ENCODE measurements at regions of chr1 and their contacts with region 1.

Region 1: GRCh38 chr1:32255072-32256071 is 4.3 kb downstream of the LCK start:
- DNase-seq: peak; percentile 55
- H3K4me3 Mint-ChIP-seq: peak overlapping the region; percentile 98
- H3K27ac Mint-ChIP-seq: peak overlapping the region; percentile 93
- H3K4me1 Mint-ChIP-seq: peaks cover 45% of the 10 kb centered on the region
- H3K27me3 Mint-ChIP-seq: no peaks in the 10 kb centered on the region

Region 2: GRCh38 chr1:32179443-32180185 is 75.8 kb before region 1 on chr1 and contains the start of gene TXLNA:
- CTCF ChIA-PET with region 1: interaction called, 6 read pairs
- POLR2A ChIA-PET with region 1: interaction called, 27 read pairs
- DNase-seq: peak; percentile 92
- H3K4me3 Mint-ChIP-seq: peak within 1 kb of the TSS; percentile 88
- H3K27ac Mint-ChIP-seq: peak within 1 kb of the TSS; percentile 96
- H3K4me1 Mint-ChIP-seq: peaks cover 43% of the 10 kb centered on the region
- H3K27me3 Mint-ChIP-seq: no peaks in the 10 kb centered on the region
- total RNA-seq, gene TXLNA: 79.8 to 81.2 TPM

Region 3: DNA sequence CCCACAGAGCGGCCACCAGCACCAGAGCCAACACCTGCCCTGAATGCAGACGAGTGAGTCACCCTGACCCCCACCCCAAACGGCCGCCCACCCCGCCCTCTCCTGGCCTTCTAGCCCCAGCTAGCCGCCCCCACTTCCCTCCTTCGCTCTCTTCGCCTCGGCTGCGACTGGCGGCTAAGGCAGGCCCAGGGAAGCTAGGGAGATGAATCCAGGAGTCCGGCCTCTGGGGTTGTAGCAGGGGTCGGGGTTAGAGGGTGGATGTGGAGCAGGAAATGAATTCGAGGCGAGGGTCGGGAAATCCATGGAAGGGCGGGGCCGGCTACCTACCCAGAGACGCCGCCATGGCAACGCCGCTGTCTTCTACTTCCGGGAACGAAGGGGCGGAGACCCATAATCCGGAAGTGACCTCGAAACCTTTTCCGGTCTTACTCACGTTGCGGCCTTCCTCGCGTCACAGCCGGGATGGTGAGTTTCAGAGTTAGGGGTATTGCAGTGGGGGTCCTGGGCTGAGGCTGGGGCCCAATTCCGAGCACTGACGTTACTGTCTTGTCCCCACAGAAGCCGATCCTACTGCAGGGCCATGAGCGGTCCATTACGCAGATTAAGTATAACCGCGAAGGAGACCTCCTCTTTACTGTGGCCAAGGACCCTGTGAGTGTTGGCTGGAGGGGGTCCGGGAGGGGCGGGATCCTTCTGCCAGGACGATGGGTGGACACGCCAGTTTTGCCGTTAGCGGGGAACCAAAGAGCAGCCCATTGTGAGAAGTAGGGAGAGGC is 33.2 kb before region 1 on chr1 and contains the starts of genes EIF3I and TMEM234:
- CTCF ChIA-PET with region 1: interaction called, 25 read pairs
- POLR2A ChIA-PET with region 1: interaction called, 38 read pairs
- DNase-seq: peak; percentile 93
- H3K4me3 Mint-ChIP-seq: peak within 1 kb of the TSS; percentile 97
- H3K27ac Mint-ChIP-seq: peak within 1 kb of the TSS; percentile 94
- H3K4me1 Mint-ChIP-seq: peaks cover 46% of the 10 kb centered on the region
- H3K27me3 Mint-ChIP-seq: no peaks in the 10 kb centered on the region
- total RNA-seq, gene EIF3I: 161 to 172 TPM
- total RNA-seq, gene TMEM234: 15.3 to 16.4 TPM

Region 4: GRCh38 chr1:32240140-32240951 is 15.0 kb before region 1 on chr1:
- CTCF ChIA-PET with region 1: interaction called, 73 read pairs
- POLR2A ChIA-PET with region 1: interaction called, 63 read pairs
- DNase-seq: peak; percentile 54
- H3K4me3 Mint-ChIP-seq: peak overlapping the region; percentile 78
- H3K27ac Mint-ChIP-seq: no peak overlapping the region
- H3K4me1 Mint-ChIP-seq: peaks cover 19% of the 10 kb centered on the region
- H3K27me3 Mint-ChIP-seq: no peaks in the 10 kb centered on the region

Region 5: GRCh38 chr1:32273388-32274208 is 18.2 kb after region 1 on chr1:
- CTCF ChIA-PET with region 1: interaction called, 31 read pairs
- POLR2A ChIA-PET with region 1: interaction called, 156 read pairs
- DNase-seq: peak; percentile 81
- H3K4me3 Mint-ChIP-seq: peak overlapping the region; percentile 54
- H3K27ac Mint-ChIP-seq: peak overlapping the region; percentile 83
- H3K4me1 Mint-ChIP-seq: peaks cover 50% of the 10 kb centered on the region
- H3K27me3 Mint-ChIP-seq: no peaks in the 10 kb centered on the region

Region 6: GRCh38 chr1:32291708-32292492 is 36.5 kb after region 1 on chr1 and contains the start of gene HDAC1:
- CTCF ChIA-PET with region 1: interaction called, 10 read pairs
- POLR2A ChIA-PET with region 1: interaction called, 35 read pairs
- DNase-seq: peak; percentile 98
- H3K4me3 Mint-ChIP-seq: peak within 1 kb of the TSS; percentile 91
- H3K27ac Mint-ChIP-seq: peak within 1 kb of the TSS; percentile 84
- H3K4me1 Mint-ChIP-seq: peaks cover 53% of the 10 kb centered on the region
- H3K27me3 Mint-ChIP-seq: no peaks in the 10 kb centered on the region
- total RNA-seq, gene HDAC1: 180 to 185 TPM

Region 7: DNA sequence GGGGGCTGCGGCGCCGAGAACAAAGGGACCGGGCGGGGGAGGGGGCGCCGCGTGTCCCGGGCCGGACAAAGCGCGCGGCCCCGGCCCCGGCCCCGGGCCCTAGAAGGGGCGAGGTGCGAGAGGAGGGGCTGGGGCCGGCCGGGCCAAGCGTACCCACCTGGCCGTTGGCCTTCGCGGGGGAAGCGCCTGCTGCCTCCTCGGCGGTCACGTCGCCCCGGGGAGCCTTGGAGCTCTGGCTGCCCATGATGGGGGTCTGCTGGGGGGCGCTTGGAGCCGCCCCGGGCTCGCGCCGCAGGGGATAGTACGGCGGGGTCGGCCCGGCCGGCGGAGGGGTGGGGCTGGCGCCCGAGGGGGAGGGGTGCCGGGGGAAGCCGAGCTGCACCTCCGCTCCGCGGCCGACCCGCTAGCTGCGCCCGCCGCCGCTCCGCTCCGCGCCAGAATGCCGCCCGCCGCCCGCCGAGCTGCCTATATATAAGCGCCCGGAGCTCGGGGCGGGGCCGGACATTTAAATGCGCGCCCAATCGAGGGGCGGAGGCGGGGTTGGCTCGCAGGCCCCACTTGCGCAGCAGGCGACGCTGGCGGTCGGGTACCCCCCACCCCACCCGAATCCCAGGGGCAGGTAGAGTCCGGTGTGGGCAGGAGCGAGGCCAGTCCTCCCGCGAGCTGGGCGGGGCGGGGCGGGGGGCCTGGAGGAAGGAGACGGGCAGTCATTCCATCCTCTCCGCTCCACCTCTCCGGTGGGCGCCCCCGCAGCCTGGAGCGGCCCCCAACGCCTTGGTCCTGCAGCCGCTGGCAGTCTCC is 80.6 kb after region 1 on chr1 and contains the start of gene MARCKSL1:
- CTCF ChIA-PET with region 1: interaction called, 6 read pairs
- POLR2A ChIA-PET with region 1: interaction called, 26 read pairs
- DNase-seq: peak; percentile 82
- H3K4me3 Mint-ChIP-seq: peak within 1 kb of the TSS; percentile 79
- H3K27ac Mint-ChIP-seq: peak within 1 kb of the TSS; percentile 13
- H3K4me1 Mint-ChIP-seq: peaks cover 37% of the 10 kb centered on the region
- H3K27me3 Mint-ChIP-seq: peaks cover 13% of the 10 kb centered on the region
- total RNA-seq, gene MARCKSL1: 26.4 to 27.9 TPM

Measured in activated CD4-positive, alpha-beta memory T cell treated with anti-CD3 and anti-CD28 coated beads, Interleukin-2, amount 10 ng/mL, durations not matched to agents 7 days and 5 days (primary cell).